ENCODE measurements at regions of chr13 and their contacts with region 1.

Region 1: DNA sequence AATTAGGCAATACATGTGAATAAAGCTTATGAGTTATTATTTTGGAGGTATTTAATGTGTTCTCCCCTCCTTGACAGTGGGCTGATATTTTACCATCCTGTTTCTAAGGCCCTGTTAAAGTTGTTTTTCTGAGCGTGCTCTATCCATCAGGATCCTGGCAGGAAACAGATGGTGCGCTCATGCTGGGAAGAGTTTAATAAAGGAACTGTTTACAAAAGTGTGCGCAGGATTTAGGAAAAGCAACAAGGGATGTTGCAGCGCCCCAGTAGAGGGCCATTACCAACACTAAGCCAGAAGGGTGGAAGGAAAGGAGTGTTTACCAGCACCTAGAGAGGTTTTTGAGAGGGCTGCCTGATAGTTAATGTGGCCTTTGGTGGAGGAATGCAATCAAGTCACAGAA is 374.5 kb downstream of the KCNRG start:
- DNase-seq: peak; percentile 92
- H3K4me3 ChIP-seq: no peak overlapping the region
- H3K27ac ChIP-seq: peak overlapping the region; percentile 25
- H3K4me1 ChIP-seq: peaks cover 38% of the 10 kb centered on the region
- H3K27me3 ChIP-seq: no peaks in the 10 kb centered on the region
- CTCF ChIP-seq: no peak
- POLR2A ChIP-seq: no peak

Region 2: GRCh38 chr13:50334115-50334778 is 55.5 kb before region 1 on chr13:
- CTCF ChIA-PET with region 1: no interaction called
- POLR2A ChIA-PET with region 1: no interaction called
- dilution Hi-C with region 1: no loop called
- intact Hi-C with region 1: loop called (anchors 2 kb)
- DNase-seq: peak; percentile 7
- H3K4me3 ChIP-seq: no peak overlapping the region
- H3K27ac ChIP-seq: peak overlapping the region; percentile 7
- H3K4me1 ChIP-seq: peaks cover 10% of the 10 kb centered on the region
- H3K27me3 ChIP-seq: no peaks in the 10 kb centered on the region
- CTCF ChIP-seq: no peak
- POLR2A ChIP-seq: no peak

Region 3: DNA sequence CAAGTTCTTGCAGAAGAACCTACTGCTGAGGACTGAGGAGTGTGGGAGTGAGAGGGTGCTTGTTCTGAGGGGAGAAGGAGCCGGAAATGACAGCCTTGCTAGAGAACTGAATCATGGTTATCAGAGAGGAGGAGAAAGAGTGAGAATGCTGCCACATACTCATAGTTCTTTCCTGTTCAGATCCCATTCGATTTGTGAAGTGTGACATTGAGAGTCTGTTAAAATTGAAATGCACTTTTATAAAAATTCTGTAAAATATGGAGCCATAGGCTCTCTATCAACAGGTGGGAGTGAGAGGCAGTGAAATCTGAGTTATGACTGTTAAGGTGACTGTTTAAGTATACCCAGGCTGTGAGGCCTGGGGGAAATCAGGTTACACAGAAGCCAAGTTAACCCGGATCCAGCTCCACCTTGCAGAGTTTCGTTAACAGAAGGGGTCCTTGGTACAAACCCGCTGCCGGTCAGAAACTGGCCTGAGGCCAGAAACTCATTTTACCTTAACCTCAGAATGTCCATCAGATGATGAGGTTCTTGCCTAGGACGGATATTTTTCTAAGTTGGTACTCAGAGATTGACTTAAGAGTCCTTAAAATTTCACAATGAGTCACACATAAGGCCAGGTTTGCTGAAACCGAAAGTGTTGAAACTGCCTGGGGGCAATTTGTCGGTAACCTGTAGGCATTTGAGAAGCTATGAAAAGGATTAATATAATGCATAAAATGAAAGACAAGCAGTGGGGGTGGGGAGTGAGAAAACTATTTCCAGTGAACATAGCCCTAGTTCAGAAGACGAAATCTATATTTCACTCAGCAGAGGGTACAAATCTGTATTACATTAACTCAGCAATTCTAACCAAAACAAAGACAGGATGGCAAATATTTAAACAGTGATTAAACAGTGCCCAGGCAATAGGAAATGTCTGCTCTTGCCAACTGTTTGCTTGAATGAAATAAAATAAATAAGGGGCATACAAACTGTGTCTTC is 24.0 kb before region 1 on chr13:
- CTCF ChIA-PET with region 1: no interaction called
- POLR2A ChIA-PET with region 1: no interaction called
- dilution Hi-C with region 1: no loop called
- intact Hi-C with region 1: loop called (anchors 1 kb)
- DNase-seq: peak; percentile 79
- H3K4me3 ChIP-seq: peak overlapping the region in 2 of 3 experiments; percentile 45 to 48
- H3K27ac ChIP-seq: peak overlapping the region; percentile 83
- H3K4me1 ChIP-seq: peaks cover 20% of the 10 kb centered on the region
- H3K27me3 ChIP-seq: no peaks in the 10 kb centered on the region
- CTCF ChIP-seq: no peak
- POLR2A ChIP-seq: no peak

Region 4: GRCh38 chr13:50410921-50411712 is 21.4 kb after region 1 on chr13:
- CTCF ChIA-PET with region 1: interaction called, 5 read pairs
- POLR2A ChIA-PET with region 1: no interaction called
- dilution Hi-C with region 1: no loop called
- intact Hi-C with region 1: loop called (anchors 1 kb)
- DNase-seq: peak; percentile 94
- H3K4me3 ChIP-seq: no peak overlapping the region
- H3K27ac ChIP-seq: peak overlapping the region; percentile 46
- H3K4me1 ChIP-seq: peaks cover 21% of the 10 kb centered on the region
- H3K27me3 ChIP-seq: no peaks in the 10 kb centered on the region
- CTCF ChIP-seq: no peak
- POLR2A ChIP-seq: no peak

Region 5: GRCh38 chr13:50421473-50422130 is 31.9 kb after region 1 on chr13:
- CTCF ChIA-PET with region 1: interaction called, 3 read pairs
- POLR2A ChIA-PET with region 1: no interaction called
- dilution Hi-C with region 1: no loop called
- intact Hi-C with region 1: loop called (anchors 1 kb)
- DNase-seq: peak; percentile 91
- H3K4me3 ChIP-seq: peak overlapping the region in 1 of 3 experiments; percentile 9
- H3K27ac ChIP-seq: peak overlapping the region; percentile 57
- H3K4me1 ChIP-seq: peaks cover 19% of the 10 kb centered on the region
- H3K27me3 ChIP-seq: no peaks in the 10 kb centered on the region
- CTCF ChIP-seq: no peak
- POLR2A ChIP-seq: no peak

Region 6: GRCh38 chr13:50448535-50448998 is 58.8 kb after region 1 on chr13:
- CTCF ChIA-PET with region 1: interaction called, 3 read pairs
- POLR2A ChIA-PET with region 1: no interaction called
- dilution Hi-C with region 1: no loop called
- intact Hi-C with region 1: loop called (anchors 1 kb)
- DNase-seq: peak; percentile 97
- H3K4me3 ChIP-seq: no peak overlapping the region
- H3K27ac ChIP-seq: peak overlapping the region; percentile 94
- H3K4me1 ChIP-seq: peaks cover 22% of the 10 kb centered on the region
- H3K27me3 ChIP-seq: no peaks in the 10 kb centered on the region
- CTCF ChIP-seq: no peak
- POLR2A ChIP-seq: peak; percentile 65

Region 7: GRCh38 chr13:50676602-50677001 is 286.9 kb after region 1 on chr13:
- CTCF ChIA-PET with region 1: no interaction called
- POLR2A ChIA-PET with region 1: no interaction called
- dilution Hi-C with region 1: no loop called
- intact Hi-C with region 1: no loop called
- DNase-seq: peak; percentile 49
- H3K4me3 ChIP-seq: no peak overlapping the region
- H3K27ac ChIP-seq: no peak overlapping the region
- H3K4me1 ChIP-seq: peaks cover 30% of the 10 kb centered on the region
- H3K27me3 ChIP-seq: no peaks in the 10 kb centered on the region
- CTCF ChIP-seq: no peak
- POLR2A ChIP-seq: no peak